T-cell (primary cell): ENCODE measurements at regions of chr2 and their contacts with region 1.

Region 1: GRCh38 chr2:196926562-196927375 is at the start of gene PGAP1:
- DNase-seq: peak; percentile 47 to 87 (median 68)
- ATAC-seq: peak; percentile 80 to 87 (median 82)
- H3K4me3 ChIP-seq: peak within 1 kb of the TSS; percentile 97 to 98
- H3K4me3 Mint-ChIP-seq: peak within 1 kb of the TSS; percentile 96 to 100 (median 96)
- H3K27ac ChIP-seq: peak within 1 kb of the TSS; percentile 75
- H3K27ac Mint-ChIP-seq: peak within 1 kb of the TSS; percentile 94 to 95
- H3K4me1 ChIP-seq: peaks cover 14 to 18% of the 10 kb centered on the region in 2 experiments
- H3K4me1 Mint-ChIP-seq: peaks cover 38 to 50% (median 44%) of the 10 kb centered on the region in 3 donors
- H3K27me3 ChIP-seq: no peaks in the 10 kb centered on the region
- H3K27me3 Mint-ChIP-seq: no peaks in the 10 kb centered on the region
- total RNA-seq, gene PGAP1: 10.8 to 17.4 (median 13.9) TPM

Region 2: DNA sequence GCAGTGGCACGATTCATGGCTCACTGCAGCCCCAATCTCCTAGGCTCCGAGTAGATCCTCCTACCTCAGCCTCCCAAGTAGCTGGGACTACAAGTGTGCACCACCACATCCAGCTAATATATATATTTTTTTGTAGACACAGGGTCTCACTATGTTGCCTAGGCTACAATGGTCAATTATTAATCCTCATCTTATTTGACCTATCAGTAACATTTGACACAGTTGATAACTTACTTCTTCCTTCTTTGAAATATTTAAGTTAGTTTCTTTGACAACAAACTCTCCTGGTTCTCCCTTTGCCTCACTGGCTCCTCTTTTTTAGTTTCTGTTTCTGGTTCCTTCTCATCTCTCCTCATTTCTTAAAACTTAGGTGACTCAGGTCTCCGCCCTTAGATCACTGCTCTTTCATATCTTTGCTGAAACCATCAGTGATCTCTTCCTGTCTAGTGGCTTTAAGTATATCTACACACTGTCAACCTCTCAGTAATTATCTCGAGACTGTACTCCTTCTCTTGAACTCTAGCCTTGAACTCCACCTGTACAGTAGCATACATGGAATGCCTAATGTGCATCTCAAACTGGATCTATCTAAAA is 11.8 kb before region 1 on chr2:
- CTCF ChIA-PET with region 1: no interaction called
- POLR2A ChIA-PET with region 1: interaction called, 3 to 13 read pairs
- DNase-seq: peak in 4 of 35 experiments; percentile 17 to 52 (median 20)
- ATAC-seq: peak; percentile 96 to 98 (median 98)
- H3K4me3 ChIP-seq: peak overlapping the region; percentile 2 to 15
- H3K4me3 Mint-ChIP-seq: peak overlapping the region; percentile 14 to 65 (median 42)
- H3K27ac ChIP-seq: peak overlapping the region; percentile 71
- H3K27ac Mint-ChIP-seq: peak overlapping the region; percentile 92 to 93
- H3K4me1 ChIP-seq: peaks cover 11 to 16% of the 10 kb centered on the region in 2 experiments
- H3K4me1 Mint-ChIP-seq: peaks cover 34 to 38% (median 35%) of the 10 kb centered on the region in 3 donors
- H3K27me3 ChIP-seq: no peaks in the 10 kb centered on the region
- H3K27me3 Mint-ChIP-seq: no peaks in the 10 kb centered on the region

Region 3: GRCh38 chr2:197072533-197072932 is 145.8 kb after region 1 on chr2:
- CTCF ChIA-PET with region 1: interaction called in 1 of 2 experiments, 14 read pairs
- POLR2A ChIA-PET with region 1: no interaction called
- DNase-seq: no peak
- ATAC-seq: no peak
- H3K4me3 ChIP-seq: no peak overlapping the region
- H3K4me3 Mint-ChIP-seq: no peak overlapping the region
- H3K27ac ChIP-seq: peak overlapping the region; percentile 1
- H3K27ac Mint-ChIP-seq: peak overlapping the region; percentile 83 to 84
- H3K4me1 ChIP-seq: peaks cover 2 to 19% of the 10 kb centered on the region in 2 experiments
- H3K4me1 Mint-ChIP-seq: peaks cover 59 to 69% (median 66%) of the 10 kb centered on the region in 3 donors
- H3K27me3 ChIP-seq: no peaks in the 10 kb centered on the region
- H3K27me3 Mint-ChIP-seq: no peaks in the 10 kb centered on the region

Region 4: DNA sequence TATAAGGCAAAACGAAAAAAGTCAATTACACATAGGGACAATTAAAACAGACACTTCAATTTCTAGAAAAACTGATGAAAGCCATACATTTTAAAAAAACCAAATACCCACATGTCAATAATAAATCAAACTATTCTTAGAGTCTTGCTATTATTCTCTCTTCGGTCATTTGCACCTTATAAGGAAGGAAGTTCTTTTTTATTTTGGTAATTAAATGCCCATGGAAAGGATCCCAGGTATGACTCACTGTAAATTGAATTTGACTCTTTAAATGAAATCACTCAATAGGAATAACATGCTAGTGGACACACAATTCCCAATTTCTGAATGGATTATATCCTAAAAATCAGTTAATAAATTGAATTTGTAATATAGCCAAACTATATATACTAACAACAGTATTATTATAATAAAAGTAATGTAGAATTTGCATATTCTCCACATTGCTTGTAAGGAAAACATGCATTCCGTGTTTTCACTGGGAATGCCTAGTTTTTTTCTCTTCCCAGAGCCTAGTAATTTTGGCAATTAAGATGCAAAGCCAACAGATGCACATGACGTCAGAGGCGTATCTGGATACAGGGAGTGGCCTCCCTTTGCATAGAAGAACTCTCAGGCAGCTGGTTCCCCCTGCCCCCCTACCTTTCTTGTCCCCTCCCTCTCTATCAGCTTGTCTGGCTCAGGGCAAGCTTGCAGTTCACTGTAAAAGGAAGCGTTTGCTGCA is 153.2 kb after region 1 on chr2:
- CTCF ChIA-PET with region 1: no interaction called
- POLR2A ChIA-PET with region 1: interaction called in 1 of 2 experiments, 12 read pairs
- DNase-seq: no peak
- ATAC-seq: no peak
- H3K4me3 ChIP-seq: no peak overlapping the region
- H3K4me3 Mint-ChIP-seq: no peak overlapping the region
- H3K27ac ChIP-seq: no peak overlapping the region
- H3K27ac Mint-ChIP-seq: peak overlapping the region in 1 of 2 donors; percentile 62
- H3K4me1 ChIP-seq: no peaks in the 10 kb centered on the region
- H3K4me1 Mint-ChIP-seq: peaks cover 6 to 10% (median 7%) of the 10 kb centered on the region in 3 donors
- H3K27me3 ChIP-seq: no peaks in the 10 kb centered on the region
- H3K27me3 Mint-ChIP-seq: no peaks in the 10 kb centered on the region